Calu3 (cell line): ENCODE measurements at regions of chr12 and their contacts with region 1.

Region 1: DNA sequence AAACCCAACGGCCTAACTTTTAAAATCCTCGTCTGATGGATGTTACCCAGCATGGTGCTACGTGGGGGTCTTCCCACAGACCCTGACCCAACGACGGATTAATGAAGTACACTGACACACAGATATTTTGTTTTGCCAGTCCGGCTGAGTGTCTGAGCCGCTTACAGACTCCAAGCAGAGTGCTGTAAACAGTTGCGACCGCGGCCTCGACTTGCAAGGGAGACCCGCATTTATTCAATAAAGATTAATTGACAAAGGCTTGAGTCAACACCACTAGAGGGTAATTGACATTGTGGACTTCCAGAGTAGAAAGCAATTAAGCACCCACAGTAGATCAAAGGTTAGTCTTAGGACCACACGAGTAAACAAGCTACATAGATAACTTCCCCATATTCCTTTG is 1042.4 kb downstream of the AACS start:
- DNase-seq: no peak
- H3K4me3 Mint-ChIP-seq: no peak overlapping the region
- H3K27ac Mint-ChIP-seq: no peak overlapping the region
- H3K4me1 Mint-ChIP-seq: no peaks in the 10 kb centered on the region
- H3K27me3 Mint-ChIP-seq: no peaks in the 10 kb centered on the region
- CTCF ChIP-seq: no peak

Region 2: GRCh38 chr12:126076515-126076914 is 31.1 kb before region 1 on chr12:
- CTCF ChIA-PET with region 1: no interaction called
- intact Hi-C with region 1: loop called (anchors 1 kb)
- DNase-seq: no peak
- H3K4me3 Mint-ChIP-seq: no peak overlapping the region
- H3K27ac Mint-ChIP-seq: no peak overlapping the region
- H3K4me1 Mint-ChIP-seq: no peaks in the 10 kb centered on the region
- H3K27me3 Mint-ChIP-seq: no peaks in the 10 kb centered on the region
- CTCF ChIP-seq: no peak